Activated CD4-positive, alpha-beta T cell treated with anti-CD3 and anti-CD28 coated beads, Interleukin-2, amount 10 ng/mL, durations not matched to agents 24 days and 14 days (primary cell): ENCODE measurements at regions of chr7 and their contacts with region 1.

Region 1: GRCh38 chr7:100081535-100082102 is at the start of gene ZNF3:
- DNase-seq: peak; percentile 99
- H3K4me3 Mint-ChIP-seq: peak within 1 kb of the TSS; percentile 93
- H3K27ac Mint-ChIP-seq: peak within 1 kb of the TSS; percentile 91
- H3K4me1 Mint-ChIP-seq: peaks cover 23% of the 10 kb centered on the region
- H3K27me3 Mint-ChIP-seq: peaks cover 10% of the 10 kb centered on the region
- total RNA-seq, gene ZNF3: 21.5 and 23.3 TPM in 2 replicates

Region 2: GRCh38 chr7:99551767-99552463 is 529.7 kb before region 1 on chr7 and contains the start of gene FAM200A:
- intact Hi-C with region 1: loop called (anchors 10 kb)
- DNase-seq: peak; percentile 95
- H3K4me3 Mint-ChIP-seq: peak within 1 kb of the TSS; percentile 94
- H3K27ac Mint-ChIP-seq: peak within 1 kb of the TSS; percentile 91
- H3K4me1 Mint-ChIP-seq: peaks cover 21% of the 10 kb centered on the region
- H3K27me3 Mint-ChIP-seq: no peaks in the 10 kb centered on the region
- total RNA-seq, gene FAM200A: 4.7 and 5.8 TPM in 2 replicates

Region 3: DNA sequence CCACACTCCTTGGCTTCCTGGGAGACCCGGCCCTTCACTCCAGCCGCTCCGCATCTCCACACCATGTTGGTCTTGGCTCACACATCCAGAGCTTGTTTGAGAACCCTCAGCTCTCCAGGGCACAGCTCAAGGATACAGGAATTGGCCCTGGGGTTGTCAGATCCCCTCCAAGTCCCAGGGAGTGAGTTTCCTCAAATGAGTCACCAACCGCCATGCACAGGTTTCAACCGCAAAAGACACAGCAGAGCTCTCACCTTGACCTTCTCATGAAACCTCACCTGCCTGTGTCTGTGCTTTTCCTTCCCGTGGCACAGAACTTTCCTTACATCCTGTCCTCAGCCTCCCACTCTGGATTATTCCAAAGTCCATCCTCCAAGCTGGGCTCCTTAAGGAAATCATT is 126.4 kb before region 1 on chr7:
- intact Hi-C with region 1: no loop called
- DNase-seq: no peak
- H3K4me3 Mint-ChIP-seq: no peak overlapping the region
- H3K27ac Mint-ChIP-seq: no peak overlapping the region
- H3K4me1 Mint-ChIP-seq: no peaks in the 10 kb centered on the region
- H3K27me3 Mint-ChIP-seq: peaks cover 8% of the 10 kb centered on the region

Region 4: DNA sequence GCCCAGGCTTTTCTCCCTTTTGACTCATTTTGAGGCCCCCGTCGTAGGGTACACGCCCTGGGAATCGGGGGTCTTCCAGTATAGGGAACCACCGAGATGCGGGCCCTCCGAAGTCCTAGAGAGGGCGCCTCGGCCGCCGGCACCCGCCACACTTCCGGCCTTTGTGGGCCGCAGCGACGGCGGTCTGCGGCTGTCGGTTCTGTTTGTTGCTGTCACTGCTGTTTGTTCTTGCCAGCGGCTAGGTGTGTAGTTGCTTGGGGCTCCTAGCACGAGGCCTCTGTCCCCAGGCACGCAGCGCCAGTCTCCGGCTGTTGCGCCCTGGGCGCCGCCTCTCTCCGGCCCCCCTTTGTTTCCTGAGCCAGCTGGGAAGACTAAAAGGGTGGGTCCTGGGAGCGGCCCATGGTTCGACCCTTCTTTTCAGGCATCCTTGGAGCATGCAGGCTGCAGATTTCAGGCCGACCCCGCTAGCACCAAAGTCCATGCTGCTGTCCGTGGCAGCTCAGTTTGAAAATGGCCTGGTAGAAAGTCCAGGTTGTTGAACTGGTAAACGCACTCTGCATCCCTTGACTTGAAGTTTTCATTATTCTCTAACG is 84.0 kb before region 1 on chr7:
- intact Hi-C with region 1: loop called (anchors 1 kb)
- DNase-seq: peak; percentile 92
- H3K4me3 Mint-ChIP-seq: peak overlapping the region; percentile 81
- H3K27ac Mint-ChIP-seq: peak overlapping the region; percentile 89
- H3K4me1 Mint-ChIP-seq: peaks cover 12% of the 10 kb centered on the region
- H3K27me3 Mint-ChIP-seq: peaks cover 2% of the 10 kb centered on the region

Region 5: DNA sequence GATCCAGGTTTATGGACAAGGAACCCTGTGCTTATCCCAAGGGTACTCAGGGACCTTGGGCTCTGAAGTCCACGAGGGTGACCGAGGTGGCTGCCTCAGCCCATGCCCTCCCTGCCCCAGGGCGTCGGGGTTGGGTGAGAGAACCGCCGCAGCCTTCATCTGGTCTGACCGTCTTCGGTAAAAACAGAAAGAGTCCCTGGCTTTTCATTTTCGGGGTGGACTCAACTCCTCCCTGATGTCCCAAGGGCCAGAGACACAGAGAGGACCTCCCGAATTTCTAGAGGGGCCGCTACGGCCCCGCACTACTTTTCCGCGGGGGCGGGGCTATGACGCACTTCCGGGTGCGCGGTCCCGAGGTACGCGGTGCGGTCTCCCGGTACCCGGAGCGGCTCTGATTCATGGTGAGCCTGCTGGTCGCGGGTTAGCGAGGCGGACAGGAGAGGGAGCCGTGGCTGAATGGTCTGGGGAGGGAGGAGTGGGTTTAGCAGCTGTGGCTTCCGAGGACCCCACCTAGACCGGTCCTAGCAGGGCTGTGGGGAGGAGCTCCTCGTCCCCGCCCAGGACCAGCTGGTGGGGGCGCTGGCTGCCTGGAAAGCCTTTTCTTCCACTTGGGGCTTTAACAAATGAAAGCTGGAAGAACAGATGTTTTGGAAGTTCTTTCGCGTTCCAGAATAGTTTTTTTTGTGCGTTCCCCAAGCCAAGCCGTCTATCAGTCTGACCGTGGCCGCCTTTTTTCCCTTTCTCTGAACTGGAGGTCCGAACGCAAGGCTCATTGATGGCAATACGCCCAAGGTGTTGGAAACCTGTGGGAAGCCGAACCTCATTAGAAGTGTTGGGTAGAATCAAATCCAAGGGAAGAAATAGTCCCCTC is 31.9 kb before region 1 on chr7 and contains the start of gene ZSCAN21:
- intact Hi-C with region 1: loop called (anchors 5 kb)
- DNase-seq: peak; percentile 95
- H3K4me3 Mint-ChIP-seq: peak within 1 kb of the TSS; percentile 94
- H3K27ac Mint-ChIP-seq: peak within 1 kb of the TSS; percentile 93
- H3K4me1 Mint-ChIP-seq: peaks cover 12% of the 10 kb centered on the region
- H3K27me3 Mint-ChIP-seq: peaks cover 3% of the 10 kb centered on the region
- total RNA-seq, gene ZSCAN21: 8.0 TPM in 2 replicates

Region 6: DNA sequence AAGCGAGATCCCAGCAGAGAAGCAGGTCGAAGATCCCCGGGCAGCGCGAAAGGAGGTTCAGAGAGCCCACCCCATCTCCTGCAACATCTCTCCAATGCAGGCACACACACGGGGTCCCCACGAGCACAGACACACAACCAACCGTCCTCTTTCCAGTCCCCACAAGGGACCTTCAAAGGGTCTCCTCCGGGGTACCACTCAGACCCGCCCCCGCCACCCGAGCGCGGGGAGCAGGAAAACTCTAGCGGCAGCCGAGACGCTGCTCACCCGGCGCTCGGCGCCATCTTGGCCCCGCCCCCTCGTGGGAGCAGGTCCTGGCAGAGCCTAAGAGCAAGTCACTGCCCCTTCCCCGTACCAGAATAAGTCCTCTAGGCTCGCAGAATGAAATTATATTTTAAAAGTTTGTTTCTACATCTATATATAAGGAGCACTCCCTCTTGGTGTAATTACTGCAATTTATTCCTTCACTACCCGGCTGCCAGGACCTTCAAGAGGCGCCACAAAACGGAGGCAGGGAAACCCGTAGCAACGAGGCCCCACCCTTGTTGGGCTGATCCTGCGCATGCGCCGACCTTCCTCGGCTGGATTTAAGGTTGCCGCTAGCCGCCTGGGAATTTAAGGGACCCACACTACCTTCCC is 37.6 kb after region 1 on chr7 and contains the starts of genes CNPY4 and TAF6:
- intact Hi-C with region 1: loop called (anchors 1 kb)
- DNase-seq: peak; percentile 98
- H3K4me3 Mint-ChIP-seq: peak within 1 kb of the TSS; percentile 84
- H3K27ac Mint-ChIP-seq: peak within 1 kb of the TSS; percentile 96
- H3K4me1 Mint-ChIP-seq: peaks cover 16% of the 10 kb centered on the region
- H3K27me3 Mint-ChIP-seq: no peaks in the 10 kb centered on the region
- total RNA-seq, gene CNPY4: 16.2 and 17.0 TPM in 2 replicates
- total RNA-seq, gene TAF6: 68.4 and 71.5 TPM in 2 replicates